ENCODE measurements at regions of chr4 and their contacts with region 1.

Region 1: DNA sequence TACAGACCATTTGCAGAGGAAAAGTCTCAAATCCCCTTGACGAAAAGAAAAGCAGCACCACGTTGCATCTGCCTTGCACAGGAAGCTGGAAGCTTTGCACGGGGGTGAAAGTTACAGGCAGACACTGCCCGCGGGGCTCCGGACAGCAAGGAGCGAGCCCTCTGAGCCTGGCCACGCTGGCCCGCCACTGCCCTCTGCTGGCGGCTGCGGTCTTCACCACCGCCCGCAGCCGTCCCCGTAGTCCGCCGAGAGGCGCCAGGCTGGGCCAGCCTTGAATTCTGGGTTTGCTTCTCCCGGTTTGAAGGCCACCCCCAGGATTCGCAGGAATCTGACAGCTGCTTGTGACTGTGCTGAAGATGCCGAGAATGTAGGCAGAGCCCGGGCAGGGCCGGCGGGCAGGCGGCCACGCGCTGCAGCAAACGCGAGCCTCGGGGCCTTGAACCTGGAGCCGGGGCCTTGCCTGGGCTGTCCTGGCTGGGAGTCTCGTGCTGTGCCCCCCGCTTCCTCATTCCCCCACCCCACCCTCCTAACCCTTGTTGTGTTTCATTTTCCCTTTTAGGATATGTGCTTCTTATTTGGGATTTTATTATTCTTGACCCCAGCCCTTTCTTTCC is 49.2 kb downstream of the ENPP6 start:
- DNase-seq: peak; percentile 42
- H3K4me3 Mint-ChIP-seq: no peak overlapping the region
- H3K27ac Mint-ChIP-seq: peak overlapping the region; percentile 80
- H3K4me1 Mint-ChIP-seq: peaks cover 21% of the 10 kb centered on the region
- H3K27me3 Mint-ChIP-seq: peaks cover 24% of the 10 kb centered on the region

Region 2: GRCh38 chr4:183471946-183472708 is 696.4 kb before region 1 on chr4:
- intact Hi-C with region 1: loop called (anchors 2 kb)
- DNase-seq: peak; percentile 56
- H3K4me3 Mint-ChIP-seq: no peak overlapping the region
- H3K27ac Mint-ChIP-seq: no peak overlapping the region
- H3K4me1 Mint-ChIP-seq: peaks cover 6% of the 10 kb centered on the region
- H3K27me3 Mint-ChIP-seq: peaks cover 5% of the 10 kb centered on the region

Region 3: GRCh38 chr4:183618681-183619080 is 549.8 kb before region 1 on chr4:
- intact Hi-C with region 1: loop called (anchors 10 kb)
- DNase-seq: no peak
- H3K4me3 Mint-ChIP-seq: no peak overlapping the region
- H3K27ac Mint-ChIP-seq: no peak overlapping the region
- H3K4me1 Mint-ChIP-seq: no peaks in the 10 kb centered on the region
- H3K27me3 Mint-ChIP-seq: peaks cover 14% of the 10 kb centered on the region

Region 4: GRCh38 chr4:183840311-183840710 is 328.2 kb before region 1 on chr4:
- intact Hi-C with region 1: loop called (anchors 1 kb)
- DNase-seq: peak; percentile 37
- H3K4me3 Mint-ChIP-seq: no peak overlapping the region
- H3K27ac Mint-ChIP-seq: no peak overlapping the region
- H3K4me1 Mint-ChIP-seq: peaks cover 6% of the 10 kb centered on the region
- H3K27me3 Mint-ChIP-seq: peaks cover 8% of the 10 kb centered on the region

Region 5: GRCh38 chr4:184016759-184017668 is 151.5 kb before region 1 on chr4:
- intact Hi-C with region 1: no loop called
- DNase-seq: no peak
- H3K4me3 Mint-ChIP-seq: no peak overlapping the region
- H3K27ac Mint-ChIP-seq: no peak overlapping the region
- H3K4me1 Mint-ChIP-seq: peaks cover 5% of the 10 kb centered on the region
- H3K27me3 Mint-ChIP-seq: peaks cover 10% of the 10 kb centered on the region

Region 6: GRCh38 chr4:184100297-184100885 is 68.1 kb before region 1 on chr4:
- intact Hi-C with region 1: loop called (anchors 5 kb)
- DNase-seq: peak; percentile 11
- H3K4me3 Mint-ChIP-seq: no peak overlapping the region
- H3K27ac Mint-ChIP-seq: no peak overlapping the region
- H3K4me1 Mint-ChIP-seq: no peaks in the 10 kb centered on the region
- H3K27me3 Mint-ChIP-seq: peaks cover 2% of the 10 kb centered on the region

Region 7: GRCh38 chr4:184237612-184238011 is 69.1 kb after region 1 on chr4:
- intact Hi-C with region 1: loop called (anchors 5 kb)
- DNase-seq: peak; percentile 62
- H3K4me3 Mint-ChIP-seq: peak overlapping the region; percentile 70
- H3K27ac Mint-ChIP-seq: peak overlapping the region; percentile 97
- H3K4me1 Mint-ChIP-seq: peaks cover 59% of the 10 kb centered on the region
- H3K27me3 Mint-ChIP-seq: no peaks in the 10 kb centered on the region

Region 8: DNA sequence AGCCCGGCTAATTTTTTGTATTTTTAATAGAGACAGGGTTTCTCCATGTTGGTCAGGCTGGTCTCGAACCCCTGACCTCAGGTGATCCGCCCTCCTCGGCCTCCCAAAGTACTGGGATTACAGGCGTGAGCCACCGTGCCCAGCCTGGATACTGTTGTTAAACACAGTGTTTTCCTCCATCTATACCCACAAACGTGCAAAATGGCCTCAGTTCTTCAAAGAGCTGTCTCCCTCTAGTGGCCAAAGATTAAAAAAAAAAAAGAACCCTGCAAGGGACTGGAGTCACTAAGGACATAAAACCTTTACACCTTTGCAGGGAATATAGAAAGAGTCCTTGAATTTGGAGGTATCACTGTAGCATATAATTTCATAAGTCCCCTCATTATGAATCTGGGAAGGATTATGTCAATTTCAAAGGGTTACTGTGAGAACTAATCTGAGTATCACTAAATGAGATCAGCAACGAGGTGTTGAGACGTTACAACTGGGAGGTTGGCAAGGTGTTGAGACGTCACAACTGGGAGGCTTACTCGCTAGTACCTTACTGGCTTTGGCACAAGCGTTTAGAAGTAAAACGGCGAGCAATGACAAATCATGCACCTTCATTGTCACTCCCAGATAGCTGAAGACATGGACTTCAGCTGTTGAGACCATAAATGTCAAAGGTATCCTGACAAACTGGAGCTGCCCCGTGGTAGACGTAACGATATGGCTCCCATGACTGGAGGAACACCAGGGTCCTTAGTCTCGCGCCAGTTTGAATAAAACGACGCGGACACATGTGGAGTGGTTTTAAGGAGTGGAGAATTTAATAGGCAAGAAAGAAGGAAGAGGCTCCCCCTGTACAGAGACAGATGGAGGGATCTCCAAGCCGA is 82.5 kb after region 1 on chr4:
- intact Hi-C with region 1: loop called (anchors 1 kb)
- DNase-seq: no peak
- H3K4me3 Mint-ChIP-seq: peak overlapping the region; percentile 27
- H3K27ac Mint-ChIP-seq: peak overlapping the region; percentile 94
- H3K4me1 Mint-ChIP-seq: peaks cover 38% of the 10 kb centered on the region
- H3K27me3 Mint-ChIP-seq: peaks cover 1% of the 10 kb centered on the region